CD14-positive monocyte (primary cell): ENCODE measurements at regions of chr2 and their contacts with region 1.

Region 1: DNA sequence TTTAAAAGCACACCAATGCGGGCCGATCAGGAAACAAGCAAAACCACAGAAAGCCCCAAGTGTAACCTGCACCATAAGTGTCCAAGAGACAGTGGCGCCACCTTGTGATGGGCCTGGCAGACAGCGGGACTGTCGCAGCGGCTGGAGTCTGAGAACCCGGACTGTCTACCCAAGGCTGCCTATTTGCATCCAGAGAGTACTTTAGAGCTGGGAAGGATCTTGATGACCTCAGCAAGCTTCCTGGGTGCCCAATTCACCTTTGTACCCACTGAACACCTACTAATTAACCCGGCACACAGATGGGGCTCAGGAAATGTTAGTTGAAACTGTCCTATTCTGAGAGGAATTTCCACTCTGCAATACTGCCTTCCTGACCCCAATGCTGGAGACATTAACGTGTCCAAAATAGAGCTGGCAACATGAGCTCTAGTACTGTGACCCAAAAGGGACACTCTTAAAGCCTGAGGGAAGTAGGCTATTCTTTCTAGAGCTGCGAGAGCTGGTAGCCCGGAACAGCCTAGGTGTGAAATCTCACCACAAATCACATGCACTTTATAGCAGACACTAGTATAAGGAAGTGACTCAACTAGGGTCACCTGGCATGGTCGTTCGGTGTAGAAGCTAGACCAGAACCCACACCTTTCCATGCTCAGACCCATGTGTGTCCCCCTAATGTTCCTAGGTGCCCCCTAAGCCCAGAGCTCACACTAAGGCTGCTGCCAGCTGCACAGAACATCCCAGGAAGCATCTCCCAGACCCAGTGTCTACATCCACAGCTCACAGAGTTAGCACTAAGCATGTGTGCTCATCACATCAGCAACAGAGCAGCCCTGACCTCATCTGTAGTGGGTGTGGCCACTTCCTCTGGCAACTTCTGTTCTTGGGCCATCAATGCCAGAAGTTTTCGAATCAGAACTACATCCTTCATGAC is 25.4 kb downstream of the POLR1A start:
- DNase-seq: peak; percentile 75 to 79 (median 77)
- H3K4me3 ChIP-seq: no peak overlapping the region
- H3K4me3 Mint-ChIP-seq: peak overlapping the region in 1 of 2 donors; percentile 60
- H3K27ac ChIP-seq: peak overlapping the region; percentile 43 to 76
- H3K27ac Mint-ChIP-seq: peak overlapping the region; percentile 95 to 98 (median 98)
- H3K4me1 ChIP-seq: peaks cover 15 to 16% of the 10 kb centered on the region in 2 donors
- H3K4me1 Mint-ChIP-seq: peaks cover 20% of the 10 kb centered on the region
- H3K27me3 ChIP-seq: no peaks in the 10 kb centered on the region
- H3K27me3 Mint-ChIP-seq: peaks cover 0 to 2% (median 0%) of the 10 kb centered on the region in 3 donors
- CTCF ChIP-seq: peak; percentile 85

Region 2: GRCh38 chr2:85826990-85827878 is 253.0 kb before region 1 on chr2:
- intact Hi-C with region 1: loop called (anchors 1 to 2 kb)
- DNase-seq: peak; percentile 47 to 65 (median 64)
- H3K4me3 ChIP-seq: peak overlapping the region in 1 of 3 experiments; percentile 42
- H3K4me3 Mint-ChIP-seq: peak overlapping the region; percentile 42 to 48
- H3K27ac ChIP-seq: no peak overlapping the region
- H3K27ac Mint-ChIP-seq: peak overlapping the region in 1 of 7 donors; percentile 46
- H3K4me1 ChIP-seq: peaks cover 2 to 5% of the 10 kb centered on the region in 2 donors
- H3K4me1 Mint-ChIP-seq: peaks cover 12% of the 10 kb centered on the region
- H3K27me3 ChIP-seq: no peaks in the 10 kb centered on the region
- H3K27me3 Mint-ChIP-seq: peaks cover 2 to 8% (median 3%) of the 10 kb centered on the region in 3 donors
- CTCF ChIP-seq: peak; percentile 92

Region 3: GRCh38 chr2:86201671-86202335 is 121.6 kb after region 1 on chr2:
- intact Hi-C with region 1: no loop called
- DNase-seq: no peak
- H3K4me3 ChIP-seq: no peak overlapping the region
- H3K4me3 Mint-ChIP-seq: no peak overlapping the region
- H3K27ac ChIP-seq: no peak overlapping the region
- H3K27ac Mint-ChIP-seq: no peak overlapping the region
- H3K4me1 ChIP-seq: peaks cover 4 to 12% of the 10 kb centered on the region in 2 donors
- H3K4me1 Mint-ChIP-seq: peaks cover 9% of the 10 kb centered on the region
- H3K27me3 ChIP-seq: no peaks in the 10 kb centered on the region
- H3K27me3 Mint-ChIP-seq: peaks cover 0 to 1% (median 1%) of the 10 kb centered on the region in 3 donors
- CTCF ChIP-seq: no peak

Region 4: GRCh38 chr2:86221066-86221684 is 140.9 kb after region 1 on chr2:
- intact Hi-C with region 1: no loop called
- DNase-seq: peak; percentile 32 to 60 (median 48)
- H3K4me3 ChIP-seq: no peak overlapping the region
- H3K4me3 Mint-ChIP-seq: no peak overlapping the region
- H3K27ac ChIP-seq: no peak overlapping the region
- H3K27ac Mint-ChIP-seq: peak overlapping the region in 2 of 7 donors; percentile 24 to 59
- H3K4me1 ChIP-seq: peaks cover 14% of the 10 kb centered on the region in 2 donors
- H3K4me1 Mint-ChIP-seq: peaks cover 19% of the 10 kb centered on the region
- H3K27me3 ChIP-seq: no peaks in the 10 kb centered on the region
- H3K27me3 Mint-ChIP-seq: peaks cover 0 to 1% (median 1%) of the 10 kb centered on the region in 3 donors
- CTCF ChIP-seq: peak; percentile 85